Activated B cell treated with CpG ODN at 0.5 μM for 24 hours (primary cell): ENCODE measurements at regions of chr15 and their contacts with region 1.

Region 1: GRCh38 chr15:44570361-44570760 is 33.4 kb downstream of the EIF3J start:
- DNase-seq: no peak
- ATAC-seq: no peak
- H3K4me3 Mint-ChIP-seq: no peak overlapping the region
- H3K27ac Mint-ChIP-seq: no peak overlapping the region
- H3K4me1 Mint-ChIP-seq: no peaks in the 10 kb centered on the region
- H3K27me3 Mint-ChIP-seq: no peaks in the 10 kb centered on the region
- CTCF ChIP-seq: no peak

Region 2: DNA sequence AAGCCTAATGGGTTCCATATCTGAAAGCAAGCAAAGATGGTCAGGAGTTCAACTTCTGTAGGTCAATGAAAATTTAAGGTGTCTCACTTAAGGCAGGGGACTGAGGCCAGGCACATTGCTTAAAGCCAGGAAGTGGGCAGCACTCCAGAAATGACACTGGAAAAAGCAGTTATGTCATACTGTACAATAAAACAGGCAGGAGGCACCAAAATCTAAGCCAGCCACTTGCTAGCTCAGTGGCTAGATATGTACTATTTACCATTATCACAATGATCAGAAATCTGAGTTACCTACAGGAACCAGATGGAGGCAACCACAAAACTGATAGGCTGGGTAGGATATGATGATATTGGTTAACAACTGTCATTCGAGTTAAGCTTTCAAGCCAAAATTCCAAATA is 432.6 kb before region 1 on chr15:
- CTCF ChIA-PET with region 1: no interaction called
- POLR2A ChIA-PET with region 1: no interaction called
- intact Hi-C with region 1: no loop called
- DNase-seq: no peak
- ATAC-seq: no peak
- H3K4me3 Mint-ChIP-seq: no peak overlapping the region
- H3K27ac Mint-ChIP-seq: no peak overlapping the region
- H3K4me1 Mint-ChIP-seq: no peaks in the 10 kb centered on the region
- H3K27me3 Mint-ChIP-seq: peaks cover 6% of the 10 kb centered on the region
- CTCF ChIP-seq: no peak

Region 3: DNA sequence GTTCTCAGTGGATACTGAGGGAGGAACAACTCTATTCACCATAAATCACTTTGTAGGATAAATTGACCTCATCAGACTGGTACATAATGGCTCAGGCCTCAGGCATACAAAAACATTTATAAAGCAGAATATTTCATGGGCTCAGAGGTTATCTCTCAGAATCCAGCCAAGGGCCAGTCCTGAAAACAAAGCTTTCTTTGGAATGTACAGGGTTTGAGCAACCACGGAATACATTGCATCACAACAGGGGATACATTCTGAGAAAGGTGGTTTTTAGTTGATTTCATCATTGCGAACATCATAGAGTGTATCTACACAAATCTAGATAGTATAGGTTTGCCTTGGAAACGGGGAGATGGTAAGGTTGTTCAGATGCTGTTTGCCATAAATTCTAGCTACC is 176.3 kb before region 1 on chr15:
- CTCF ChIA-PET with region 1: no interaction called
- POLR2A ChIA-PET with region 1: no interaction called
- intact Hi-C with region 1: no loop called
- DNase-seq: no peak
- ATAC-seq: no peak
- H3K4me3 Mint-ChIP-seq: no peak overlapping the region
- H3K27ac Mint-ChIP-seq: no peak overlapping the region
- H3K4me1 Mint-ChIP-seq: peaks cover 2% of the 10 kb centered on the region
- H3K27me3 Mint-ChIP-seq: no peaks in the 10 kb centered on the region
- CTCF ChIP-seq: no peak

Region 4: GRCh38 chr15:44545913-44546802 is 24.2 kb before region 1 on chr15:
- CTCF ChIA-PET with region 1: no interaction called
- POLR2A ChIA-PET with region 1: no interaction called
- intact Hi-C with region 1: loop called (anchors 2 kb)
- DNase-seq: no peak
- ATAC-seq: peak; percentile 64
- H3K4me3 Mint-ChIP-seq: no peak overlapping the region
- H3K27ac Mint-ChIP-seq: peak overlapping the region; percentile 57
- H3K4me1 Mint-ChIP-seq: peaks cover 51% of the 10 kb centered on the region
- H3K27me3 Mint-ChIP-seq: no peaks in the 10 kb centered on the region
- CTCF ChIP-seq: no peak